Common myeloid progenitor, CD34-positive (primary cell): ENCODE measurements at regions of chr14 and their contacts with region 1.

Region 1: DNA sequence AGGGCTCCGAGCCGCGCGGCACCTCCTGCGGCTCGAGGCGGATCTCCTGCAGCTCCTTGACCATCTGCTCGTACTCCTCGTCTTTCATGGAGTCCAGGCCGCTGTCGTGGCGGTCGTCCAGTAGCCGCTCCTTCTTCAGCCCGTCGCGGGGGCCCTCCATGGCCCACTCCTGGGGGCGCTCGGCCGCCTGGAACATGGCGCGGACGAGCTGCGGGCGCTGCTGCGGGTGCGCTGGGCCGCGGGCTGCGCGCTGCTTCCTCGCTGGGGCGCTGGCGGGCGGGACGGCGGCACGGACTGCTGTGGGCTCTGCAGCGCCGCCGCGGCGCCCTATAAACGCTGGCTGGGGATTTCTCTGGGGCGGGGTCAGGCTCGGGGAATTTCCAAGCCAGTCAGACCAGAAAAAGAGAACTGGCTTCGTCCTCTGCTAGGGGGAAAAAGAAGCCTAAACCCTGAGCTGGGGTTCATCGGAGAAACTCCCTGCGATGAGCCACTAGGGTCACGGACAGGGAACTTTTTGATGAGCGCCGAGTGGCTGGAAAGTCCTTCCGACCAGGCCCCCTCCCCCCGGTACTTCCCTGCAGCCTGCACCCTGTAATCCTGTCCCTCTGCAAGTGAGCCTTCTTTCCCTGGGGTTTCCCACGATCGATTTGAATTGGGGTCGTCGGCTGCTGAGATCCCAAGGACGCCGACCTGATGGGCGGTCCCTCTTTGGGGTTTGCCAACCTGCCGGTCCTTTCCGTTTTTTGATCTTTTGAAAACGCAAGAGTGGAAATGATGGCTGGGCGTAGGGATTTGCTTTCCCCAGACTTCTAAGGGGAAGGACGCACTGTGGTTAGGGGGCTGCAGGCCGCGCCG is at the start of gene NFKBIA:
- DNase-seq: peak; percentile 94 to 97 (median 97)
- H3K4me3 ChIP-seq: peak within 1 kb of the TSS; percentile 84 to 97 (median 87)
- H3K27ac ChIP-seq: peak within 1 kb of the TSS; percentile 93 to 94
- H3K4me1 ChIP-seq: peaks cover 40 to 53% (median 51%) of the 10 kb centered on the region in 4 experiments
- H3K27me3 ChIP-seq: no peaks in the 10 kb centered on the region

Region 2: GRCh38 chr14:35121887-35122695 is 282.6 kb before region 1 on chr14 and contains the starts of genes PPP2R3C and PRORP:
- CTCF ChIA-PET with region 1: interaction called, 5 read pairs
- POLR2A ChIA-PET with region 1: interaction called, 13 read pairs
- DNase-seq: peak; percentile 95 to 99 (median 97)
- H3K4me3 ChIP-seq: peak within 1 kb of the TSS; percentile 50 to 98 (median 92)
- H3K27ac ChIP-seq: peak within 1 kb of the TSS; percentile 99 to 100
- H3K4me1 ChIP-seq: peaks cover 7 to 29% (median 24%) of the 10 kb centered on the region in 4 experiments
- H3K27me3 ChIP-seq: no peaks in the 10 kb centered on the region

Region 3: DNA sequence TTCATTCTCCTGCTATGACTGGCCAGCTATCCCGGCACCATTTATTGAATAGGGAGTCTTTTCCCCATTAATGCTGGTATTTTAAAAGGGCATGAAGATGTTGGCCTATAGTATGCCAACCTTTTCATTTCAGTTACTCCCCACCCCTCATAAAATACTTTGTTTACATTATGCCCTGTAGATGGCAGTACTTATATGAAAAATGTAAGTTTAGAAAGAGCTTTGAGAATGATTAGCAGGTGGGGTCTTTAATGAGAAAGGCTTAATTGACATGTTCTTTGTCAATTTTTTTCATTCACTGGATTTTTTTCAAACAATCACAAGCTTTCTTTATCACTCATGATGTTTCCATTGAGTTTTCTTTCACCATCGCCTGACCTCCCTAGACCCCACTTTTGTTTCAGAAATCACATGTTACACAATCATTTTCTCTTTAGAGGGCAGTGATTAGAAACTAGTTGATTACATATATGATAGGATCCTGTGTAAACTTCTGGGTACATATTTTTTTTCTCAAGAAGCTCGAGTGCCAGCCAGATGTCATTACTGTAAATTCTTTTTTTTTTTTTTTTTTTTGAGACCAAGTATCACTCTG is 175.1 kb before region 1 on chr14:
- CTCF ChIA-PET with region 1: interaction called, 19 read pairs
- POLR2A ChIA-PET with region 1: interaction called, 7 read pairs
- DNase-seq: peak; percentile 36 to 69 (median 69)
- H3K4me3 ChIP-seq: no peak overlapping the region
- H3K27ac ChIP-seq: no peak overlapping the region
- H3K4me1 ChIP-seq: peaks cover 20 to 48% (median 35%) of the 10 kb centered on the region in 4 experiments
- H3K27me3 ChIP-seq: no peaks in the 10 kb centered on the region

Region 4: DNA sequence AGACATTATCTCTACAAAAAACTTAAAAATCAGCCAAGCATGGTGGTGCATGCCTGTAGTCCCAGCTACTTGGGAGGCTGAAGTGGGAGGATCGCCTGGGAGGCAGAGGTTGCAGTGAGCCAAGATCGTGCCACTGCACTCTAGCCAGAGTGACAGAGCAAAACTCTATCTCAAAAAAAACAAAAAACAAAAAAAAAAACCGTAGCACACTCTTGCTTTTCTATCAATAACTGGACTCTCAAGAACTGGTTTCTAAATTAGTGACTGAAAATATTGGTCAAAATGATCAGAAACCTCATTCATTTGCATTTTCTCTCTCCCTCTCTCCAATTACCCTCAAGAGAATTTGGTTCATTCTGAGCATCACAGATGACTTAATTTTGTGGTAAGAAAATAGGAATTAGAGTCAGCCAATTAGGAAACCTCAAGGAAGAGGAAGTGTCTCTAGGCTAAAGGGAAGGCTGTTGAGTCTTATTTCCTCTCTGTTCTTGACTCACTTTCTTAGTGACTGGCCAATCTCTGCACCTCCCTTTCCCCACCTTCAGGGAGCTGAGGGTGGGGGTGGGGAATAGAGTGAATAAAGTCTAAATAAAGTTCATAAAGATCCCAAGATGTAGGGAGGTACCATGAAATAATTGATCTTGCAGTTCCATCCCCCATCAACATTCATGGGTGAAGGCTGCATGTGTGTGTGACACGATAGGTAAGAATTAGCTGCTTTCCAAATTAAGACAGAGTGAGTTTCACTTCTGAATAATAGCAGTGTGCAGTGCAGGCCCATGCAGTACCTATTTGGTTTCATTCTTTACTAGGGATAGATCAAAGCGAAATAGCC is 119.3 kb before region 1 on chr14:
- CTCF ChIA-PET with region 1: interaction called, 10 read pairs
- POLR2A ChIA-PET with region 1: interaction called, 27 read pairs
- DNase-seq: peak; percentile 78 to 90 (median 85)
- H3K4me3 ChIP-seq: peak overlapping the region in 6 of 7 experiments; percentile 39 to 66 (median 53)
- H3K27ac ChIP-seq: peak overlapping the region; percentile 77 to 89
- H3K4me1 ChIP-seq: peaks cover 52 to 92% (median 68%) of the 10 kb centered on the region in 4 experiments
- H3K27me3 ChIP-seq: no peaks in the 10 kb centered on the region

Region 5: DNA sequence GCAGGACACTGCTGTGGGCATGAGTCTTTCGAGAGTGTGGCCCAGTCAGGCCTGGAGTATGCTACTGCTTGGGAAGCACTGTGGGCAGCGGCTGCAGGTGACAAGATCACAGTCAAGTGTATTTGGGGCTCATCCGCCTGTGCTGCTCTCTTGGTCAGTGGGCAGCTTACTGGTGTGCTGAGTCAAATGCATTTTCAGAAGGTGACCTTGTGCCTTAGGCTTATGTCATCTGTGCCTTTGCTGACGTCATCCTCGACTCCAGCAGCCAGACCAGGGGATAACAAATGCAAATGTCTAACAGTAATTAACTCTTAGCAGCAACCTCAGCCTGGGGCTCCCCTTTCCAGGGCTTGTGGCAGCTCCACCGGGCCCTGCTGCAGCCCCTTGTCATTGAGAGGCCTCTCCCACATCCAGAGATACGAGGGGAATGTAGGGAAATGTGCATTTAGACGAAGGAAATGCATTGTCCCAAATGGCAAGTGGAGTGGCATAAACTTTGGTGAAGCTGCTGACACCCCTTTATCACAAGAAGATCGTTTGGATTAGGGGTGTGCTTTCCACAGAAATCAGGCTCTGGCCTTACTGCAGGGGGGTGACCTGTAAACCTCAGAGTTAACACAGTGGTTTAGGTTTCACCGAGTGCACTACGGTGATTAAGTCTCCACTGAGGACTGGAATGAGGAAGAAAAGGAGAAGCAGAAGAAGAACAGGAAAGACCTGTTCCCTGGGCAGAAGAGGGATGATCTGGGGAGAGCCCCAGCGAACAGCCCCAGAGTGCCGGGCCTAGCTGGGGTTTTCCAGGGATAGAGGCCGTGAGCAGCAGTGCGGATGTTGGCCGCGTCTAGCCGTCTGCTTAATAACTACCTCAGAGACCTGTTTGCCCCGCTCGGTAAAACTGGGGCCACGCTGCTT is 72.8 kb before region 1 on chr14:
- CTCF ChIA-PET with region 1: interaction called, 3 read pairs
- POLR2A ChIA-PET with region 1: interaction called, 27 read pairs
- DNase-seq: peak; percentile 32 to 87 (median 81)
- H3K4me3 ChIP-seq: peak overlapping the region in 1 of 7 experiments; percentile 8
- H3K27ac ChIP-seq: peak overlapping the region in 1 of 2 experiments; percentile 61
- H3K4me1 ChIP-seq: peaks cover 9 to 47% (median 37%) of the 10 kb centered on the region in 4 experiments
- H3K27me3 ChIP-seq: no peaks in the 10 kb centered on the region

Region 6: DNA sequence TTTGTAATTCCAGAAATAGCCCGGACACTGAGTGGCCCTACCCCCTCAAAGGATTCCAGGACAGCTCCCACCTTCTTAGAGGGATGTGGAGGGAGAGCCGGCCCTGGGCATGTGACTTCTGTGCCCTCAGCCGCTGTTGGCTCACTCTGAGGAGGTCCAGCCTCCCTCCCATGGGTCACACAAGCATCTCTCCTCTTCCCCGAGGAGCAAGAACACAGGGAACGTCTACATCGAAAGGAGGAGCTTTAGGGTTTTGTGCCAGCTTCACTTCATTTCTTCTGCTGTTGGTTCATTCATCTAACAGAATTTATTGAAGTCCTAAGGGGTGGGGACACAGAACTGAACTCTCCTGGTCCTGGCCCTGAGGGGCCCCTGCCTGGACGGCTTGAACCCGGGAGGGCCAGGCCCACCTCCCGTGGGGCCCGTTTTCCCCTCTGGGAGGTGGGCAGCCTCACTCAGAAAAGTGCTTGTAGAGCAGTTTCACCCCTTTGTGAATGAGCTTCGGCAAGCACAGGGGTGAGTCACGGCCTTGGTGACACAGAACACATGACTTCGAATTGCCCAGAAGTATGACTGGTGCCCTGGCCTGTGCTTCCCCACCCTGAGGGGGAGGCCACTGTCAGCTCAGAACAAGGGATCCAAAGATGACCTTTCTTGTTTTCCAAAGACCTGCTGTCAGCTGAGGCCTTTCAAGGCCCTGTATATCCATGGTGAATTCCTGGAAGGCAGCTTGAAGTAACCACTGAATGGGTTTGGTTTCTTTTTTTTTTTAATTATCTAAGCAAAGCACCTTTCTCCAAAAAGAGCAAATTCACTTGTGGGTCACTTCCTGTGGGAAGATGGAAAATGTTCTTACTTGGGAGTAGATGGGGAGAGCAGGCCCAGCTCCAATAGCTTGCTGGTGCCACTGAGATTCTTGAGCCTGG is 39.3 kb before region 1 on chr14:
- CTCF ChIA-PET with region 1: interaction called, 110 read pairs
- POLR2A ChIA-PET with region 1: interaction called, 128 read pairs
- DNase-seq: peak; percentile 77 to 94 (median 92)
- H3K4me3 ChIP-seq: peak overlapping the region in 1 of 7 experiments; percentile 28
- H3K27ac ChIP-seq: peak overlapping the region; percentile 89 to 91
- H3K4me1 ChIP-seq: peaks cover 18 to 63% (median 59%) of the 10 kb centered on the region in 4 experiments
- H3K27me3 ChIP-seq: no peaks in the 10 kb centered on the region

Region 7: GRCh38 chr14:35456261-35456660 is 51.6 kb after region 1 on chr14:
- CTCF ChIA-PET with region 1: no interaction called
- POLR2A ChIA-PET with region 1: no interaction called
- DNase-seq: no peak
- H3K4me3 ChIP-seq: no peak overlapping the region
- H3K27ac ChIP-seq: no peak overlapping the region
- H3K4me1 ChIP-seq: no peaks in the 10 kb centered on the region
- H3K27me3 ChIP-seq: no peaks in the 10 kb centered on the region